Heart right ventricle (tissue), 16 donors: ENCODE measurements at regions of chr10 and their contacts with region 1.

Region 1: GRCh38 chr10:104445359-104445758 is 91.7 kb downstream of the CFAP58 start:
- DNase-seq: no peak
- ATAC-seq: no peak
- H3K4me3 ChIP-seq: no peak overlapping the region
- H3K27ac ChIP-seq: no peak overlapping the region
- H3K4me1 ChIP-seq: peaks cover 0 to 8% (median 0%) of the 10 kb centered on the region in 9 donors
- H3K27me3 ChIP-seq: no peaks in the 10 kb centered on the region
- CTCF ChIP-seq: no peak

Region 2: DNA sequence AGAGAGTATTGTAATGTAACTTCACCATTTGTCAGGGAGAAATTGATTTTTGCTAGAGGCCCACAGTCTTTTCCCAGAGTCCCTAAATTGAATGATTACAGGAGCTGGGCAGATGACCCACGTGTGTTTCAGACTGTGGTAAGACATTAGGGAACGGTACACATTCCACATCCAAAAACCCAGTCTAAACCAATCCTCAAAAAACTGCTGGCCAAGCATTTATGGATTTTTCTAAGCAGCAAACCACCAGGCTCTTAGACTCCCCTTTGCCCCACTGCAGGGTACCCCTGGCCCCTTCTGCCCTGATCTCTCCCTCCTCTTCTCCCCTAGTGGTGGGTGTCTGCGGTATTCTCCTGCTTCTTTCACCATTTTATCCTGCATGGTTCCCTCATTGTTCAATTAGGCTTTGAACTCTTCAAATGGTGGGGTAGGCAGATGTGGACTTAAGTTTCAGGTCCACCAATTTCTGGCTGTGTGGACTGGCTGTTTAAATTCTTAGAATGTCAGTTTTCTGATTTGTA is 60.2 kb after region 1 on chr10:
- intact Hi-C with region 1: loop called in 1 of 10 experiments (anchors 2 kb)
- DNase-seq: no peak
- ATAC-seq: no peak
- H3K4me3 ChIP-seq: no peak overlapping the region
- H3K27ac ChIP-seq: no peak overlapping the region
- H3K4me1 ChIP-seq: no peaks in the 10 kb centered on the region
- H3K27me3 ChIP-seq: peaks cover 0 to 42% (median 6%) of the 10 kb centered on the region in 7 donors
- CTCF ChIP-seq: no peak

Region 3: DNA sequence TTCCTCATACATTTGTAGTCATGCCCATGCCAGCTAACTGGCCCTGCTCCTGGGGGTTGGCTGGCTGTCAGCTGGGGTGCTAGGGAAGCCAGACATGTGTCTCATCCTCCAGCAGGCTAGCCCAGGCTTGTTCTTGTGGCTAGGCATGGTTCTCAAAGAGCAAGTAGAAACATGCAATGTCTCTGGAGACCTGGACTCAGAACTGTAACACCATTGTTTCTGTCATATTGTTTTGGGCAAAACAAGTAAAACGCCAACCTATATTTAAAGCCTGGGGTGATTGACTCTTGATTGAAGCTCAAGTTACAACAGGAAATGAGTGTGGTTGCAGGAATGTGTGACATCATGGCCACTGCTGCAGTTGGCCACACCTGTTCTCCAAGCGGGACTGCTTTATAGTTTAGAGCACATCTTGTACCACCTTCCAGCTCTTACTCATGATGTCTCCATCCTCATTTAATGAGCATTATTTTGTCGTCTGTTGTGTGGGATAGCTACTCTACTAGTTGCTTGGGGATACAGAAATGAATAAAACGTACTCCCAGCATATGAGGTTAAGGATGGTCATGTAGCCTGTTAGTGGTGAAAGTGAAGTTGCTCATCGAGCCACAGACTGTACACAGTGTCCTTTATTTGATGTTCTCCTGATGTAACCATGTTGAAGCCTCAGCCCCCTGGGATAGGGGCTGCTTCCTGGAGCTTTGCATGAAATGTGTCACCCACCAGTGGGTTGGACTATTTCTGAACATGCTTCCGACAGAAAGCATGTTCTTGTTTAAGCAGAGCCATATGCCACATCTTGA is 364.1 kb after region 1 on chr10:
- intact Hi-C with region 1: no loop called
- DNase-seq: no peak
- ATAC-seq: no peak
- H3K4me3 ChIP-seq: no peak overlapping the region
- H3K27ac ChIP-seq: no peak overlapping the region
- H3K4me1 ChIP-seq: no peaks in the 10 kb centered on the region
- H3K27me3 ChIP-seq: peaks cover 0 to 9% (median 0%) of the 10 kb centered on the region in 7 donors
- CTCF ChIP-seq: no peak